ENCODE measurements at regions of chr19 and their contacts with region 1.

Region 1: GRCh38 chr19:4815426-4816201 is 15.9 kb downstream of the TICAM1 start:
- DNase-seq: no peak
- H3K4me3 ChIP-seq: no peak overlapping the region
- H3K27me3 ChIP-seq: no peaks in the 10 kb centered on the region
- CTCF ChIP-seq: no peak

Region 2: GRCh38 chr19:4851551-4852290 is 36.1 kb after region 1 on chr19:
- CTCF ChIA-PET with region 1: interaction called, 225 read pairs
- POLR2A ChIA-PET with region 1: no interaction called
- DNase-seq: no peak
- H3K4me3 ChIP-seq: no peak overlapping the region
- H3K27me3 ChIP-seq: no peaks in the 10 kb centered on the region
- CTCF ChIP-seq: peak; percentile 88

Region 3: DNA sequence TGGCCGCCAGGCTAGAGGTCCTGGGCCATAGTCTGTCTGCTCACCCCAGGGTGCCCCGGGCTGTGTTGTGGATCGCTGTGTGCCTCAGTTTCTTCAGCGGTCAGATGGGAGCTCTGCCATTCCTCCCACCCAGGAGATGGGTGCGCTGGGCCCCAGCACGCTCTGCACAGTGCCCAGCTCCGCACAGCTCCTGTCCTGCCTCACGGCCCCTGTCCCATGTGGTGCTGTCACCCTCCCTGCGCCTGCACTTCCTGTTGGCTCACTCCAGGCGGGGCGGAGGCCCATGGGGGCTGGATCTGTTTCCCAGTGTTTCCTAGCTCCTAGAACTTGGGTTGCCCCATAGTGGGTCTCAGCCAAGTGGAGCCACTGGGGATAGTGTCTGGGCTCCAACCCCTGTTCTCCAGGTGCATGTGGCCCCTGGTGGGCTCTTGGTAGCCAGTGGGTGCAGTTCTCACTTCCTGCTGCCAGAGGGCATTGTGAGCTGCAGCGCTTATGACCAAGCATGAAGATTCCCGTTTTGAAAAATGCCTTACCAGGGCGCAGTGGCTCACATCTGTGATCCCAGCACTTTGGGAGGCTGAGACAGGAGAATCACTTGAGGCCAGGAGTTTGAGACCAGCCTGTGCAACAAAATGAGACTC is 223.1 kb after region 1 on chr19:
- CTCF ChIA-PET with region 1: interaction called, 40 read pairs
- POLR2A ChIA-PET with region 1: no interaction called
- DNase-seq: no peak
- H3K4me3 ChIP-seq: no peak overlapping the region
- H3K27me3 ChIP-seq: no peaks in the 10 kb centered on the region
- CTCF ChIP-seq: peak; percentile 67